PC-9 (cell line): ENCODE measurements at regions of chr15 and their contacts with region 1.

Region 1: GRCh38 chr15:52118952-52119749 is 6.6 kb upstream of the BCL2L10 start:
- DNase-seq: no peak
- H3K4me3 ChIP-seq: no peak overlapping the region
- H3K27ac ChIP-seq: no peak overlapping the region
- H3K4me1 ChIP-seq: peaks cover 5% of the 10 kb centered on the region
- H3K27me3 ChIP-seq: no peaks in the 10 kb centered on the region
- CTCF ChIP-seq: no peak

Region 2: DNA sequence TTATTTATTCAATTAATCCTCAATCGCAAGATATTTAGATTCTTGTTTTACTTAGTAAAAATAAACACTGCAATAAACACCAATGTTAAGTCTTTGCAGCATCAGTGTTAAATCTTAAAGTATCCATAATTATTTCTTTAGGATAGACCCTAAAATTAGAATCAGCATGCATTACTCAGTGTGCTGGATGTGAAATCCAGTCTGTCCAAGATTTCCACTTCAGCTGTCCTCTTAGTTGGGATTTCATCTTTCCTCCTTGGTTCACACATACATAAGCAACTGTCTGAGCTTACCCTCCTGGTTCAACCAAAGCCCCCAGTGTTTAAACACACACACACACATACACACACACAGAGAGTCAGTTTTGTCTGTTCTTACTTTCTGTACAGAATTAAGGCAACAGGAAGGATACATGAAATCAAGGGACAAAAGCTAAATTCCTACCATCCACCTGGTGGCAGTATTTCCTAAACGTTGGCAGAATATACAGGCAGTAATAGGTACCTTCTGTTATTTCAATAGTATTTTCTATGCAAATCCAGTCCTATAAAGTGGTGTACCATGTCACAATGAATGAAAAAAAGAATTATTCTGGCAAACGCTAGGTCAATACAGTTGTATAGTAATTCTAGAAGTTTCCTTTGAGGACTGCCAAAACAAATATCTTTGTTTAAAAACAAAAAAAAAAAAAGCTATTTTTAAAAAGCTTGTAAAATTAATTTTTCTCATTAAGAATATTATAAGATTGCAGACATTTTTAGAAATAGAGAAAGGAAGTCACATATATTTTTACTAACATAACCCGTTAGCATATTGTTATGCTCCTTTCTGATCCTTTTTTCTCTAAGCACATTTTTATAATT is 469.3 kb before region 1 on chr15:
- CTCF ChIA-PET with region 1: no interaction called
- POLR2A ChIA-PET with region 1: no interaction called
- intact Hi-C with region 1: no loop called
- DNase-seq: peak; percentile 28 to 41
- H3K4me3 ChIP-seq: no peak overlapping the region
- H3K27ac ChIP-seq: no peak overlapping the region
- H3K4me1 ChIP-seq: no peaks in the 10 kb centered on the region
- H3K27me3 ChIP-seq: no peaks in the 10 kb centered on the region
- CTCF ChIP-seq: peak; percentile 81

Region 3: GRCh38 chr15:51924156-51925068 is 194.7 kb before region 1 on chr15:
- CTCF ChIA-PET with region 1: no interaction called
- POLR2A ChIA-PET with region 1: interaction called, 28 read pairs
- intact Hi-C with region 1: no loop called
- DNase-seq: no peak
- H3K4me3 ChIP-seq: no peak overlapping the region
- H3K27ac ChIP-seq: no peak overlapping the region
- H3K4me1 ChIP-seq: no peaks in the 10 kb centered on the region
- H3K27me3 ChIP-seq: no peaks in the 10 kb centered on the region
- CTCF ChIP-seq: no peak

Region 4: GRCh38 chr15:52054381-52054780 is 64.8 kb before region 1 on chr15:
- CTCF ChIA-PET with region 1: no interaction called
- POLR2A ChIA-PET with region 1: no interaction called
- intact Hi-C with region 1: no loop called
- DNase-seq: peak in 1 of 2 experiments; percentile 48
- H3K4me3 ChIP-seq: no peak overlapping the region
- H3K27ac ChIP-seq: no peak overlapping the region
- H3K4me1 ChIP-seq: peaks cover 23% of the 10 kb centered on the region
- H3K27me3 ChIP-seq: no peaks in the 10 kb centered on the region
- CTCF ChIP-seq: no peak